A549 (cell line): ENCODE measurements at regions of chr2 and their contacts with region 1.

Region 1: GRCh38 chr2:190088917-190089316 is 26.4 kb upstream of the MSTN start:
- DNase-seq: peak; percentile 10 to 71
- ATAC-seq: peak; percentile 54 to 86; a peak in 4 of 6 replicates
- H3K4me3 ChIP-seq: no peak overlapping the region
- H3K27ac ChIP-seq: no peak overlapping the region
- H3K4me1 ChIP-seq: no peaks in the 10 kb centered on the region
- CTCF ChIP-seq: peak; percentile 97
- EP300 ChIP-seq: no peak
- POLR2A ChIP-seq: no peak
- RAD21 ChIP-seq: peak; percentile 90 to 94

Region 2: GRCh38 chr2:190043441-190043840 is 45.5 kb before region 1 on chr2:
- CTCF ChIA-PET with region 1: no interaction called
- POLR2A ChIA-PET with region 1: no interaction called
- DNase-seq: no peak
- ATAC-seq: no peak
- H3K4me3 ChIP-seq: no peak overlapping the region
- H3K27ac ChIP-seq: no peak overlapping the region
- H3K4me1 ChIP-seq: no peaks in the 10 kb centered on the region
- CTCF ChIP-seq: no peak
- EP300 ChIP-seq: no peak
- POLR2A ChIP-seq: no peak
- RAD21 ChIP-seq: no peak

Region 3: GRCh38 chr2:190180313-190181122 is 91.6 kb after region 1 on chr2:
- CTCF ChIA-PET with region 1: interaction called, 14 read pairs
- POLR2A ChIA-PET with region 1: no interaction called
- DNase-seq: peak; percentile 57 to 73
- ATAC-seq: peak; percentile 96 to 97
- H3K4me3 ChIP-seq: peak overlapping the region; percentile 64
- H3K27ac ChIP-seq: peak overlapping the region; percentile 74 to 89
- H3K4me1 ChIP-seq: peaks cover 4% of the 10 kb centered on the region; the same call in 2 of the 3 replicates
- CTCF ChIP-seq: peak; percentile 65
- EP300 ChIP-seq: no peak
- POLR2A ChIP-seq: no peak
- RAD21 ChIP-seq: peak in 1 of 2 experiments; percentile 58; a peak in 4 of 5 replicates

Region 4: GRCh38 chr2:190270298-190270697 is 181.4 kb after region 1 on chr2:
- CTCF ChIA-PET with region 1: interaction called, 12 read pairs
- POLR2A ChIA-PET with region 1: no interaction called
- DNase-seq: peak; percentile 21 to 78
- ATAC-seq: peak; percentile 96 to 97
- H3K4me3 ChIP-seq: no peak overlapping the region
- H3K27ac ChIP-seq: no peak overlapping the region
- H3K4me1 ChIP-seq: peaks cover 38% of the 10 kb centered on the region
- CTCF ChIP-seq: no peak
- EP300 ChIP-seq: peak in 1 of 2 experiments; percentile 60; a peak in 1 of 5 replicates
- POLR2A ChIP-seq: no peak
- RAD21 ChIP-seq: no peak

Region 5: DNA sequence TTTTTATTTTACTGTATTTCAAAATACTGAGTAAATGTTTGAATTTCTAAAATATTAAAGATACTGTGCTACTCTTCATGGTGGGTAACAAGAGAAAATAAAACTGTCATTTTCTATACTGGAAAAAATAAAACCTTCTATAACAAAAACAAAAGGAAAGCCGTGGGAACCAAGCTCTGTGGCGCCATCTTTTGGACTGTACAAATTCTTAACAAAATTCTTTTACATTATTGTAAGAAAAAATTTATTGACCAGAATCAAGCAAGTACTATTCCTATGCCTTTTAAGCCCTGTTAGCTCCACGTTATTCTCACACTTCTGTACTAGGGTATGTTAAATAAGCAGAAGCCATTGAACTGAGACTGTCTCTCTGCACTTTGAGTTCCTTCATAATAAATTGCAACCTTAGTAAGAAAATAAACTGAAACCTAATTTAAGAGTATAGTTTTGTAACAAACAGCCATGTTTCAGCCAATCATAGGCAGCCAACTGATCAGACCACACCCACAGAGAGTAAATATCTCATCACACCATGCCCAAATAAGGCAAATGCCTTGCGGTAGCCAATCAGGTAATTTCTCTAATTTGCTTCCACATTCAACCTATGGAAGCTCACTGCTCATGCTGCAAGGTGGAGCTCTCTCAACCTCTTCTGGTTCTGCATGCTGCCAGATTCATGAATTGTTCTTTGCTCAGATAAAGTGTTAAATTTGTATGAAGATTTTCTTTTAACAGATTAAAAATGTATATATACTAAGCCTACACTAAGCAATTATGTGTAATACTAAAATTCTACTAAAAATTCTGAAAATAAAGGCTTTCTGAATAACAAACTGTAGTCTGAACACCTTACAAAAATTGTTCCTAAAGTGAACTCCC is 188.6 kb after region 1 on chr2:
- CTCF ChIA-PET with region 1: interaction called, 23 read pairs
- POLR2A ChIA-PET with region 1: no interaction called
- DNase-seq: peak in 1 of 2 experiments; percentile 47
- ATAC-seq: peak in 1 of 2 experiments; percentile 66; a peak in 3 of 6 replicates
- H3K4me3 ChIP-seq: no peak overlapping the region
- H3K27ac ChIP-seq: no peak overlapping the region
- H3K4me1 ChIP-seq: peaks cover 3% of the 10 kb centered on the region; the same call in 1 of the 3 replicates
- CTCF ChIP-seq: peak; percentile 77
- EP300 ChIP-seq: no peak
- POLR2A ChIP-seq: no peak
- RAD21 ChIP-seq: peak; percentile 79 to 85

Region 6: DNA sequence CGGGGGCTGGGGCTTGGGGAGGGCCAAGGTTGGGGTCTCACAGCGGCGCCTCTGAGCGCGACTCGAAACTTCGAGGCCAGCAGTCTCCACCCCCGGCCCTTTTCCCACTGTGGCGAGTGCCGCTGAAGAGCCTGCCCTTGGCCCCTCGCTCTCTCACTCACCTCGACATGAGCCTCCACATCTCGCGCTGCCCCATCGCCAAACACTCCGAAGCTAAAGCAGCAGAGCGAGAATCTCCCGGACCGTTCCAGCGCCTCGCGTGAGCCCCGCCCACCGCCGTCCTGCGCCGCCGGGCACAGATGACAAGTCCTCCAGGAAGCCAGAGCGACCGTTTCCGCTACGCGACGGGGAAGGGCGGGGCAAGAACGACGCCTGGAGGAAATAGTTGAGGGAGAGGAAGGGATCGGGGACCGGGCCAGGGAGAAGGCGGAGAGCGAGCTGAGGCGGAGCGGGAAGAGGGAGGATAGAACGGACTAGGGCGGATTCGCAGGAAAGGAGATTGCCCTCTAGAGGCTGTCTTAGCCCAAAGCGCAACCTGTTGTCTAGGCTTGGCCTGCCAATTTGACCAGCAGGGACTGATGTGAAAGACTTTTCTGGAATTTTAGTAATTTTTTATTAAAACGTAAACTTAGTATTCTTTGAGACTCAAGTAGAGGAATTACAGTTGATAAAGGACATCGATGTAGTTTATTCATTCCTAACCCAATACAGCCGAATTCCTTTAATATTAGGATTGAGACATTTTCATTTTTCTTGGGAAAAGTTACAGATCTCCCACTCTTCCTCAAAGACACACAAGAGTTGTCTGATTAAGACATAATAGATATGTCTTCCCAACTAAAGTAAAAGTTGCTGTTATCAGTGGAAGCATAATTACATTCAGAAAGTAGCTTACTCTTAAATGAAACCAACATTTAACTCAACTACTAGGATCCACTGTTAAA is 230.9 kb after region 1 on chr2 and contains the start of gene HIBCH:
- CTCF ChIA-PET with region 1: interaction called, 11 read pairs
- POLR2A ChIA-PET with region 1: no interaction called
- DNase-seq: peak; percentile 84 to 99
- ATAC-seq: peak; percentile 99
- H3K4me3 ChIP-seq: peak within 1 kb of the TSS; percentile 75
- H3K27ac ChIP-seq: peak within 1 kb of the TSS; percentile 82 to 91
- H3K4me1 ChIP-seq: peaks cover 14% of the 10 kb centered on the region
- CTCF ChIP-seq: peak; percentile 77
- EP300 ChIP-seq: no peak
- POLR2A ChIP-seq: peak; percentile 76
- RAD21 ChIP-seq: peak; percentile 30 to 37; a peak in 4 of 5 replicates
- polyA plus RNA-seq, gene HIBCH: 17.6 and 26.9 TPM in 2 replicates

Region 7: DNA sequence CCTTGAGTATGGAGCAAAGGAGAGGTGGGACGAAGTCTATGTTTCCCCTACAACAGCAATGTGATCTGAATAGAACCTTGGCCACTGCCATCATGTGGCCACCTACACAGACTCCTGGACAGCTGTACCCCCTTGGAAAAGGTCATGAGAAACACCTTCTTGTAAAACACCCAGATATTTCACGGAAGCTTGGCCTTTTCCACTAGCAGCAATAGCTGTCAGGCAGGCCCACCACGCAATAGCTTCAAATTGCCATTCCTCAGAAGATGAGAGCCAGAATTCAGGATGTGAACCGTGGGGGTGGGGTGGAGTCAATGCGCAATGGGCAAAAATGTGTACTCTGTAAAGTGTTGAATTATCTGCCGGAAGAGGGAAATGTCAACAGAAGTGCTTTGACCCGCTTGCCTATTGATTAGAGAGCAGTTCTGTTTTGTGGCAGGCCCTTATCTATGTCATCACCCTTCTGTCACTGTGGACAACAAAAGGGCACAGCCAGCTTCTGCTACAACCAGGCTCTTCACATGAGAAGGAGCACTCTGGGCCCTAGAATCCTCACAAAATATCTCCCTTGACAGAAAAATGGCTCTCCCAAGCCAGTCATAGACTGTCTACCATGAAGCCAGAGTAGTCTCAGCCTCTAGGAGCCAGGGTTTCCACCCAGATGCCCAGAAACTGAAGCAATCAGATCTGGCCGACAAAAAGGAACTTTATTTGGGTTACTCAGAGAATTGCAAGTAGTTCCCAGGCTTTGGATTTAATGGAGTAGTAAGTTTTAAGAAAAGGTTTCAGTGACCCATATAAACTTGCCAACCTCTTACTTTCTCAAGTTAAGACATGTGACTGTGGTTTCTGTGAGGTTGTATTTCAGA is 264.0 kb after region 1 on chr2:
- CTCF ChIA-PET with region 1: interaction called, 10 read pairs
- POLR2A ChIA-PET with region 1: no interaction called
- DNase-seq: no peak
- ATAC-seq: no peak
- H3K4me3 ChIP-seq: no peak overlapping the region
- H3K27ac ChIP-seq: no peak overlapping the region
- H3K4me1 ChIP-seq: no peaks in the 10 kb centered on the region
- CTCF ChIP-seq: no peak
- EP300 ChIP-seq: no peak
- POLR2A ChIP-seq: no peak
- RAD21 ChIP-seq: no peak